T-cell (primary cell): ENCODE measurements at regions of chr12 and their contacts with region 1.

Region 1: GRCh38 chr12:120402217-120402616 is 33.3 kb upstream of the MSI1 start:
- DNase-seq: no peak
- ATAC-seq: no peak
- H3K4me3 ChIP-seq: no peak overlapping the region
- H3K4me3 Mint-ChIP-seq: no peak overlapping the region
- H3K27ac ChIP-seq: no peak overlapping the region
- H3K27ac Mint-ChIP-seq: no peak overlapping the region
- H3K4me1 ChIP-seq: no peaks in the 10 kb centered on the region
- H3K4me1 Mint-ChIP-seq: peaks cover 0 to 3% (median 2%) of the 10 kb centered on the region in 3 donors
- H3K27me3 ChIP-seq: peaks cover 11 to 28% of the 10 kb centered on the region in 2 experiments
- H3K27me3 Mint-ChIP-seq: peaks cover 25 to 33% of the 10 kb centered on the region in 2 donors

Region 2: DNA sequence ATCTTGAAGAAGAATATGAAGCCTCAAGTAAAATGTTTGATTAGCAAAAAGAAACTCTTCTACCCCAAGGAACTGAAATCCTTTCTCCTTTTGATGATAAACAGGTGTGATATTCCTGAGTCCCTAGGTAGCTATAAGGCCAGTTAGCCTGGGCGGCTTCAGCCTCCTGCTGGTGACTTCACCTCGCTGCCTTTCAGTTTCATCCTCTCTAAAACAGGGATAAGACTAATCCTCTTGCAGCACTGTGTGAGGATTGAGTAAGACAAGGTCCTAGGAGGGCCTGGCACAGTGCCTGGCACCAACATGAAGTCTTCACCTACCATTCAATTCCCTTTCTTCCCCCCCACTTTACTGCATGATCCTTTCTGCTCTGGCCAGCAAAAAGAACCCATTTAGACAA is 567.1 kb before region 1 on chr12:
- CTCF ChIA-PET with region 1: interaction called in 1 of 2 experiments, 12 read pairs
- POLR2A ChIA-PET with region 1: no interaction called
- DNase-seq: no peak
- ATAC-seq: no peak
- H3K4me3 ChIP-seq: no peak overlapping the region
- H3K4me3 Mint-ChIP-seq: no peak overlapping the region
- H3K27ac ChIP-seq: no peak overlapping the region
- H3K27ac Mint-ChIP-seq: no peak overlapping the region
- H3K4me1 ChIP-seq: no peaks in the 10 kb centered on the region
- H3K4me1 Mint-ChIP-seq: no peaks in the 10 kb centered on the region
- H3K27me3 ChIP-seq: no peaks in the 10 kb centered on the region
- H3K27me3 Mint-ChIP-seq: no peaks in the 10 kb centered on the region

Region 3: GRCh38 chr12:120481022-120481767 is 79.0 kb after region 1 on chr12:
- CTCF ChIA-PET with region 1: no interaction called
- POLR2A ChIA-PET with region 1: no interaction called
- DNase-seq: peak in 2 of 35 experiments; percentile 14 to 61
- ATAC-seq: peak; percentile 27 to 72 (median 58)
- H3K4me3 ChIP-seq: no peak overlapping the region
- H3K4me3 Mint-ChIP-seq: peak overlapping the region in 1 of 3 donors; percentile 24
- H3K27ac ChIP-seq: peak overlapping the region; percentile 62
- H3K27ac Mint-ChIP-seq: peak overlapping the region; percentile 48 to 74
- H3K4me1 ChIP-seq: peaks cover 0 to 32% of the 10 kb centered on the region in 2 experiments
- H3K4me1 Mint-ChIP-seq: peaks cover 13 to 24% (median 14%) of the 10 kb centered on the region in 3 donors
- H3K27me3 ChIP-seq: no peaks in the 10 kb centered on the region
- H3K27me3 Mint-ChIP-seq: no peaks in the 10 kb centered on the region